Activated naive CD8-positive, alpha-beta T cell treated with anti-CD3 and anti-CD28 coated beads, Interleukin-2, amount 10 ng/mL, durations not matched to agents 7 days and 5 days (primary cell): ENCODE measurements at regions of chr1 and their contacts with region 1.

Region 1: GRCh38 chr1:149927503-149928387 is at the start of gene SF3B4:
- DNase-seq: peak; percentile 95
- ATAC-seq: peak; percentile 94
- H3K4me3 Mint-ChIP-seq: peak within 1 kb of the TSS; percentile 99
- H3K27ac Mint-ChIP-seq: peak within 1 kb of the TSS; percentile 98
- H3K4me1 Mint-ChIP-seq: peaks cover 48% of the 10 kb centered on the region
- H3K27me3 Mint-ChIP-seq: no peaks in the 10 kb centered on the region
- total RNA-seq, gene SF3B4: 72.1 to 74.8 TPM

Region 2: DNA sequence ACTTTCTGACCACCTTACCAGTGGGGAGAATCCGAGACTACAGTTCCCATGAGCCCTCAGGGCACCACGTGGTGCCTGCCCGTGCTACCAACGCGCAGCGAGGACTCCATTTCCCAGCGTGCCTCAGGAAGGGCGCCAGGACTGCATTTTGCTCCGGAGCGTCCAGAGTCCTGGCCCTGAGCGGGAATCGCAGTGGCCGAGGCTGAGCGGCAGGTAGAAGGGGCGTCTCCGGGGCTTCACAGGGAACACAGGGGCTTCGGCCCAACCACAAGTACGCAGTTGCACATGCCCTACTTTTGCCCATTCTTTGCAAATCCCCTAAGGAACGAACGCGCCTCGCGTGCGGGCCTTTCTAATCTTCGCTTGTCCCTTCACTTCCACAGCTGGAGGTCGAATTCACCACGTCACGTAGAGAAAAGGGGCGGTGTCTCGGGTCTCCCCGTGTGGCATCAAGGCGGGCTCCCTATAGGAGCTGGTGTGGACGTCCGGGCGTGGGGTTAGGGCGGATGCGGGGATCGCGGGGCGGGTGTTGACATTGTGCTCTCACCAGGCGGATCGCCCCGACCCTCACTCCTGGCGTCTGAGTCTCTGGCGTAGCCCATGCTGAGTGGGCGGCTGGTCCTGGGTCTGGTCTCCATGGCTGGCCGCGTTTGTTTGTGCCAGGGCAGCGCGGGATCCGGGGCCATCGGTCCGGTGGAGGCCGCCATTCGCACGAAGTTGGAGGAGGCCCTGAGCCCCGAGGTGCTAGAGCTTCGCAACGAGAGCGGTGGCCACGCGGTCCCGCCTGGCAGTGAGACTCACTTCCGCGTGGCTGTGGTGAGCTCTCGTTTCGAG is 28.1 kb before region 1 on chr1 and contains the start of gene BOLA1:
- POLR2A ChIA-PET with region 1: interaction called, 10 read pairs
- DNase-seq: peak; percentile 81
- ATAC-seq: peak; percentile 94
- H3K4me3 Mint-ChIP-seq: peak within 1 kb of the TSS; percentile 89
- H3K27ac Mint-ChIP-seq: peak within 1 kb of the TSS; percentile 92
- H3K4me1 Mint-ChIP-seq: peaks cover 20% of the 10 kb centered on the region
- H3K27me3 Mint-ChIP-seq: no peaks in the 10 kb centered on the region
- total RNA-seq, gene BOLA1: 23.7 to 25.4 TPM

Region 3: DNA sequence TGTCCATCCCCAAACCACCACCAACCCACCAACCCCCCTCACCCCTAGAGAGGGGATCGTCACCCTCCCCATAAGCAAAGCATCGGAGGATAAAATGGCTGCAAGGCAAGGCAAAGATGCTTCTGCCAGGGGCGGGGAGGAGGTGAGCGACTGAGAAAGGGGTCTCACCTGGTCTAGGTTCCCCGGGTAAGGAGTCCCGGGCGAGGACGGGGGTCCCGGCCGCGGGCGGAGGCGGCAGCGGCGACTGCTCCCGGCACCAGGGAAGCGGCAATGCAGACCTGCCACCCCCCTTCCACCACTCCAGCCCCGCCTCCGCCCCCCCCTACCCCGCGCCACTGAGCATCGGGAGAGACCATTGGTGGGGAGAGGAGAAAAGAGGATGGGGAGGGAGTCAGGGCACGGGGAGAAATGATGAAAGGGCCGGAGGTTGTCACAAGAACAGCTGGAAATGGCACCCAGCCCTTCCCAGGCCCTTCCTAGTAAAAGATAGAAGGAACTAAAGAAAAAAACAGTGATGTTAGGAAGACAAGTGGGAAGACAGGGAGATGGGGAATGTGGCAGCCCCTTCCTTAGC is 10.1 kb before region 1 on chr1 and contains the start of gene SV2A:
- POLR2A ChIA-PET with region 1: interaction called, 12 read pairs
- DNase-seq: peak; percentile 64
- ATAC-seq: peak; percentile 74
- H3K4me3 Mint-ChIP-seq: peak within 1 kb of the TSS; percentile 96
- H3K27ac Mint-ChIP-seq: peak within 1 kb of the TSS; percentile 91
- H3K4me1 Mint-ChIP-seq: peaks cover 42% of the 10 kb centered on the region
- H3K27me3 Mint-ChIP-seq: no peaks in the 10 kb centered on the region
- total RNA-seq, gene SV2A: 23.9 to 27.5 TPM

Region 4: DNA sequence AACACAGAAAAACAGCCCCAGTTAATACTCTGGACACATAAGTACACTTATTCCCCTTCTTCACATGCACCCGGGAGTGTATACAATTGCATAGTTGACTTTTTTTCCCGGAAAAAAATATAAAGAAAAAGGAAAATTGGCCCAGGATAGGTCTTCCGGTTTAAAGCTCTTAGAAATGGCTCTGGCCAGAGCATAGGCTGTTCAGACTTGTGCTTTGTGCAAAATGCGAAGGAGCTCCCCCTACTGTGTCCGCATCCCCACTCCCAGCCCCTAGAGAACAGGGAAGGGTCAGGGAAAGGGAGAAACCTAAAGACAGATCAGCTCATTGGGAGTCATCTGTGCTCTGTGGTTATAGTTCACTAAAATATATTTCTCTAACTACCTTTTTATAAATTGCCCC is 14.5 kb after region 1 on chr1:
- POLR2A ChIA-PET with region 1: interaction called, 31 read pairs
- DNase-seq: no peak
- ATAC-seq: no peak
- H3K4me3 Mint-ChIP-seq: no peak overlapping the region
- H3K27ac Mint-ChIP-seq: no peak overlapping the region
- H3K4me1 Mint-ChIP-seq: peaks cover 27% of the 10 kb centered on the region
- H3K27me3 Mint-ChIP-seq: no peaks in the 10 kb centered on the region

Region 5: DNA sequence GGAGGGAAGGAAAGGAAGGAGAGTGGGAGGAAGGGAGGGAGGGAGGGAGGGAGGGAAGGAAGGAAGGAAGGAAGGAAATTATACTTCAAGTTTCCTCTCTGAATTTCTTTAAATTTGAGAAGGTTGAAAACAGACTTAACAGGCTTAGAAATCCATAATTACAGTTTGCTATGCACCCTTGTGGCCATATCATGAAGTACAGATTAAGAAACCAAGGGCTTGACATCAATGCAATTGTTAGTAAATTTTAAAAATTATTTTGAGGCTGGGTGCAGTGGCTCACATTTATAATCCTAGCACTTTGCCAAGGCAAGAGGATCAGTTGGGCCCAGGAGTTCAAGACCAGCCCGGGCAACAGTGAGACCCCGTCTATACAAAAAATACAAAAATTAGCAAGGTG is 293.8 kb after region 1 on chr1:
- POLR2A ChIA-PET with region 1: no interaction called
- DNase-seq: no peak
- ATAC-seq: no peak
- H3K4me3 Mint-ChIP-seq: no peak overlapping the region
- H3K27ac Mint-ChIP-seq: no peak overlapping the region
- H3K4me1 Mint-ChIP-seq: peaks cover 11% of the 10 kb centered on the region
- H3K27me3 Mint-ChIP-seq: no peaks in the 10 kb centered on the region